ENCODE measurements at regions of chr22 and their contacts with region 1.

Region 1: GRCh38 chr22:38201710-38202436 is at the start of gene MAFF:
- DNase-seq: peak; percentile 73
- ATAC-seq: peak; percentile 75
- H3K4me3 Mint-ChIP-seq: peak within 1 kb of the TSS; percentile 86
- H3K27ac Mint-ChIP-seq: peak within 1 kb of the TSS; percentile 35
- H3K4me1 Mint-ChIP-seq: peaks cover 51% of the 10 kb centered on the region
- H3K27me3 Mint-ChIP-seq: no peaks in the 10 kb centered on the region
- CTCF ChIP-seq: no peak
- total RNA-seq, gene MAFF: 2.3 and 4.5 TPM in 2 replicates

Region 2: DNA sequence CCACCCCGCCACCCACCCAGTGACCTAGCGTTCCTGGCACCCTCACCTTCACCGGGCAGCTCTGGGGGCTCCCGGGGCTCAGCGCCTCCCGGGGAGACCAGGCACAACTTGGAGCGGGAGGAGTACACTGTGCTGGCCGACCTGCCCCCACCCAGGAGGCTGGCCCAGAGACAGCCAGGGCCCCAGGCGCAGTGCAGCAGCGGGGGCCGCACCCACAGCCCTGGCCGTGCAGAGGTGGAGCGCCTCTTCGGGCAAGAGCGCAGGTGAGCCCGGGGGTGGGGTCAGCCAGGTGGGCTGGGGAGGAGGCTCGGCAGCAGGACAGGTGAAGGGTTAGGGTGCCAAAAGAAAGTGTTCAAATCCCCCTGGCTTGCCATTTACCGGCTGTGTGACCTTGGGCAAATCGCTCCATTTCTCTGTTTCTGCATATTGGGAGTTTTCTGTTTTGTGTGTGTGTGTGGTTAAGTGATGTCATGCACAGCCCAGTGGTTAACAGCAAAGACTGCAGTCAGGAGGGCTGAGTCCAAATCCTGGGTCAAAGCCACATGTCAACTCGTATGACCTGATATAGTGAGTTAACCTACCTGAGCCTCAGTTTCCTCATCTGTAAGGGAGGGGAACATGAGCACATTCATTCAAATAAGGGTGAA is 475.5 kb before region 1 on chr22:
- CTCF ChIA-PET with region 1: no interaction called
- POLR2A ChIA-PET with region 1: no interaction called
- intact Hi-C with region 1: no loop called
- DNase-seq: no peak
- ATAC-seq: no peak
- H3K4me3 Mint-ChIP-seq: no peak overlapping the region
- H3K27ac Mint-ChIP-seq: no peak overlapping the region
- H3K4me1 Mint-ChIP-seq: no peaks in the 10 kb centered on the region
- H3K27me3 Mint-ChIP-seq: no peaks in the 10 kb centered on the region
- CTCF ChIP-seq: no peak

Region 3: DNA sequence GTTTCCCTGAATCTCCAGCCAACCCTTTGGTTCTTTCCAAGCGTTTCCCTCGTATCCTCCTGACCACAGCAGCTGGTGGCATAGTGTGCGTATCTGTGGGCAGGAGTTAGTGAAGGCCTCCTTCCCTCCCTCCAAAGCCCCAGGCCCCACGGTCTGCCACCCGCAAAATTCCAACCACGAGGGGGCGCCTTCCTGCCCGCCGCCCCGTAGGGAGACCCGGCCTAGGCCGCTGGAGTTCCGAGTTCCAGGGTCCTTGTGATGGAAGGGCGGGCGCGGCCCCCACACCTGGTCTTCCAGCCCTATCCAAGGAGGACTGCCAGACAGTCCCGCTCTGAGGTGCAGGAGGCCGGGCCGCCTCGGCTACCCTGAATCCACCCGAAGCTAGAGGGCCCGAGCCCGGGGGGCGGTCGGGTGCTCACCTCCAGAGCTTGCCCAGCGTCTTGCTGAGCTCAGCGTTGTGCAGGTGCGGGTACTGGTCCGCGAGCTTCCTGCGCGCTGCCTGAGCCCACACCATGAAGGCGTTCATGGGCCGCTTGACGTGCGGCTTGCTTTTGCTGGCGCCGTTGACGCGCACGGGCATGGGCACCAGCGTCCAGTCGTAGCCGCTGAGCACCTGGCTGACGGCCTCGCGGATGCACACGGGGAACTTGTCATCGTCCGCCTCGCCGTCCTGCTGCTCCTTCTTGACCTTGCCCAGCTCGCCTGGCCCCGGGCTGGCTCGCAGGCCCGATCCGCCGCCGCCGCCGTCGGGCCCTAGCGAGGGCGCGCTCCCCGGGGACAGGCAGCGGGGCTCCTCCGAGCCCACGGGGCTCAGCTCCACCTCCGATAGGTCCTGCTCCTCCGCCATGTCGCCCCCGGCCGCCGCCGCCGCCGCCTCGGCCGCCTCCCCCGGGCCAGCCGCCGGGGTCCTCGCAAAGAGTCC is 218.7 kb before region 1 on chr22:
- CTCF ChIA-PET with region 1: no interaction called
- POLR2A ChIA-PET with region 1: no interaction called
- intact Hi-C with region 1: no loop called
- DNase-seq: no peak
- ATAC-seq: no peak
- H3K4me3 Mint-ChIP-seq: no peak overlapping the region
- H3K27ac Mint-ChIP-seq: no peak overlapping the region
- H3K4me1 Mint-ChIP-seq: no peaks in the 10 kb centered on the region
- H3K27me3 Mint-ChIP-seq: no peaks in the 10 kb centered on the region
- CTCF ChIP-seq: no peak

Region 4: DNA sequence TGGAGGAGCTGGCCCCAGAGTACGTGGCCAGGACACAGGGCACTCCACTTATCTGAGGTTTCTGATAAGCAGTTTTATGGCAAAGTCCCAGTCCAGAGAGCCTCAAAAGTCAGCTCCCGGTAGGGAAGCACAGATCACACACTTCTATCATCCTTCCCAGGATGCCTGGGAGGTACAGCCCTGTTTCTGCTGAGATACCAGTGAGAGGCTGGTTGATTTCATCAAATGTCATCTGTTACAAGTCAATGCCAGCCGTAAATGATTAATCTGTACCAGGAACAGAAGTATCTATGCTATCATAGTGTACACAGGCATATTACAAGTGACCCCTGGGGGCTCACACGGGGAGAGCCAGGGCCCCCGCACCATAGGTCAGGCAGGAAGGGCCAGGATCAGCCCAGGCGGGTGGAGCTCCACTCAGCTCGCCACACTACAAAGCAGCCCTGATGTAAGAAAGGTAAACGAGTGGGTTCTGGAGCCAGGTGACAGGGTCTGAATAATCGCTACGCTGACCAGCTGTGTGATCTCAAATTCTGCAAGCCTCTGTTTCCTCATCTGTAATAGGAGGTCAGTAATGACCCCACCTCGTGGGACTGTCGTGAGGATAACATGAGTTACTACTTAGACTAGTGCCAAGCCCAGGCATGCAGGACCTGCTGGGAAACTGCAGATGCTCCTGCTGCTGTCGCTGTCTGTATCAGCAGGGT is 37.9 kb before region 1 on chr22:
- CTCF ChIA-PET with region 1: interaction called, 3 read pairs
- POLR2A ChIA-PET with region 1: interaction called, 5 read pairs
- intact Hi-C with region 1: loop called (anchors 2 kb)
- DNase-seq: no peak
- ATAC-seq: no peak
- H3K4me3 Mint-ChIP-seq: no peak overlapping the region
- H3K27ac Mint-ChIP-seq: peak overlapping the region; percentile 79
- H3K4me1 Mint-ChIP-seq: peaks cover 40% of the 10 kb centered on the region
- H3K27me3 Mint-ChIP-seq: no peaks in the 10 kb centered on the region
- CTCF ChIP-seq: no peak

Region 5: DNA sequence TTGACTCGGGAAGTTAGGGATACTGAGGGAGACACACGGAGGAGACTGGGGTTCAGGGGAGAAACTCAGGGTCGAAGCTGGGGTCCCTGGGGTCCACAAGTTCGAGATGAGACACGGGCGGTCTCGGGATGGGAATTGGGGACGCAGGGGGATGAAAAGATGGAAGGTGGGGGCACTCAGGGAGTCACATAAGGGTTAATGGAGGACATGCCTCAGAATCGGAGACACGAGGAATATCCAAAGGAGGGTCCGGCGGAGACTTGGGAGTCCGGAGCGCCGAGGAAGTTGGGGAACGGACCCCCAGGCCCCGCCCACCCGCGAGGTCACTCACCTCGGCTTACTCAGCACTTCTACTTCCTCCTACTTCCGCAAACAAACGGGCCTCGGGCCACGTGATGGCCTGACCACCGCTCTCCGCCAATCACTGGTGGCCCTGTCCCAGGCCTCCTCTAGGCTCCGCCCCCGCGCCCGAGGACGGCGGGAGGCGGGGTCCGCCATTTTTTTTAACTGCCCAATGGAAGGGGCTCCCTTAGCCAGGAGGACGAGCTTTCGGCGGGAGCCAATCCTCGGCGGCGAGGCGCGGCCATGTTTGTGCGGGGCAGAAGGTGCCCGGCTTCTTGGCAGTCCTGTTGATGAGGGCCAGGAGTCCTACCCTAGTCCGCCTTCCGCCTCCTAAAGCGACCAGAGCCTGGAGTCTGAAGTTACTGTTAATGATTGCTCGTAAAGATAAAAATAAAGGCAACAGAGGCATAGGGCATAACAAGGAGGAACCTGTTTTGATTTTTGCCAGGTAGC is 20.2 kb before region 1 on chr22 and contains the start of gene PLA2G6:
- CTCF ChIA-PET with region 1: no interaction called
- POLR2A ChIA-PET with region 1: interaction called, 11 read pairs
- intact Hi-C with region 1: loop called (anchors 1 kb)
- DNase-seq: peak; percentile 97
- ATAC-seq: peak; percentile 97
- H3K4me3 Mint-ChIP-seq: peak within 1 kb of the TSS; percentile 92
- H3K27ac Mint-ChIP-seq: peak within 1 kb of the TSS; percentile 85
- H3K4me1 Mint-ChIP-seq: peaks cover 43% of the 10 kb centered on the region
- H3K27me3 Mint-ChIP-seq: peaks cover 4% of the 10 kb centered on the region
- CTCF ChIP-seq: no peak
- total RNA-seq, gene PLA2G6: 53.0 and 64.0 TPM in 2 replicates

Region 6: DNA sequence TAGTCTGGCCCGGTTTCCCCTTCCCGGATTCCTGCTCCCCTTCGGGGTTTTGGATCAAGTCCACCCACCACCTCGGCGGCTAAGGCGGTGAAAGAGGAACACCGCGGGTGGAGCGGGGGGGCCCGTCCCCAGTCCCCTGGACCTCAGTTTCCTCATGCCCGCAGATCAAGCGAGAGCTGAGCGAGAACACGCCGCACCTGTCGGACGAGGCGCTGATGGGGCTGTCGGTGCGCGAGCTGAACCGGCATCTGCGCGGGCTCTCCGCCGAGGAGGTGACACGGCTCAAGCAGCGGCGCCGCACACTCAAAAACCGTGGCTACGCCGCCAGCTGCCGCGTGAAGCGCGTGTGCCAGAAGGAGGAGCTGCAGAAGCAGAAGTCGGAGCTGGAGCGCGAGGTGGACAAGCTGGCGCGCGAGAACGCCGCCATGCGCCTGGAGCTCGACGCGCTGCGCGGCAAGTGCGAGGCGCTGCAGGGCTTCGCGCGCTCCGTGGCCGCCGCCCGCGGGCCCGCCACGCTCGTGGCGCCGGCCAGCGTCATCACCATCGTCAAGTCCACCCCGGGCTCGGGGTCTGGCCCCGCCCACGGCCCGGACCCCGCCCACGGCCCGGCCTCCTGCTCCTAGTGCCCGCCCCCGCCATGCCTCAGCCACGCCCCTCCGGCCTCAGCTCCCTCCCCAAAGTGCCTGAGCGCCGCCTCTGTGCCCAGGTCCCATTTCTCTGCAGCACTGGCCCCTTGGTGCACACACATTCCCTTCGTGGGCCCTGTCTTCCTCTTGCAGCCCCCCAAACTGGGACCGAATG is 12.6 kb after region 1 on chr22:
- CTCF ChIA-PET with region 1: interaction called, 8 read pairs
- POLR2A ChIA-PET with region 1: interaction called, 8 read pairs
- intact Hi-C with region 1: loop called (anchors 1 kb)
- DNase-seq: peak; percentile 68
- ATAC-seq: peak; percentile 89
- H3K4me3 Mint-ChIP-seq: peak overlapping the region; percentile 71
- H3K27ac Mint-ChIP-seq: peak overlapping the region; percentile 18
- H3K4me1 Mint-ChIP-seq: peaks cover 24% of the 10 kb centered on the region
- H3K27me3 Mint-ChIP-seq: no peaks in the 10 kb centered on the region
- CTCF ChIP-seq: no peak

Region 7: DNA sequence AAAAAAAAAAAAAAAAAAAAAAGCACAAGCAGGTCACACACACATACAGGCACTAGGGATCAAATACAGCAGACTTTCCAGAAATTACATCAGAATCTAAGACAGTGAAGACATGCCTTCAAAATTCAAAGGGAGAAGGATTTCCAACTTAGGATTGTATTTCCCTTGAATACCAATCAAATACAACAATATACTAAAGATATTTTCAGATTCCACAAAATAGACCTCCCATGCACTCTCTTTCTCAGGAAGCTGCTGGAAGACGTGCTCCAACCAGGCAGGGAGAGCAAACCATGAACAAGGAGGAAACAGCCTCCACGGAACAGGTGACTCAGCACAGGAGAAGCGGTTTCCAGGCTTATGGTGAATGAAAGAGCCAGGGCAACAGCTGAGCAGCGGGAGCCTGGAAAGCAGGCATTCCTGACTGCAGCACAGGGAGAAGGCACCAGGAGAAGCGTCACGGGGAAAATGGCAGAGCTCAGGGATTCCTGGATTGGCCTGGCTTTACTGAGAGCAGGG is 38.9 kb after region 1 on chr22:
- CTCF ChIA-PET with region 1: no interaction called
- POLR2A ChIA-PET with region 1: no interaction called
- intact Hi-C with region 1: no loop called
- DNase-seq: no peak
- ATAC-seq: no peak
- H3K4me3 Mint-ChIP-seq: no peak overlapping the region
- H3K27ac Mint-ChIP-seq: no peak overlapping the region
- H3K4me1 Mint-ChIP-seq: no peaks in the 10 kb centered on the region
- H3K27me3 Mint-ChIP-seq: no peaks in the 10 kb centered on the region
- CTCF ChIP-seq: no peak

Region 8: DNA sequence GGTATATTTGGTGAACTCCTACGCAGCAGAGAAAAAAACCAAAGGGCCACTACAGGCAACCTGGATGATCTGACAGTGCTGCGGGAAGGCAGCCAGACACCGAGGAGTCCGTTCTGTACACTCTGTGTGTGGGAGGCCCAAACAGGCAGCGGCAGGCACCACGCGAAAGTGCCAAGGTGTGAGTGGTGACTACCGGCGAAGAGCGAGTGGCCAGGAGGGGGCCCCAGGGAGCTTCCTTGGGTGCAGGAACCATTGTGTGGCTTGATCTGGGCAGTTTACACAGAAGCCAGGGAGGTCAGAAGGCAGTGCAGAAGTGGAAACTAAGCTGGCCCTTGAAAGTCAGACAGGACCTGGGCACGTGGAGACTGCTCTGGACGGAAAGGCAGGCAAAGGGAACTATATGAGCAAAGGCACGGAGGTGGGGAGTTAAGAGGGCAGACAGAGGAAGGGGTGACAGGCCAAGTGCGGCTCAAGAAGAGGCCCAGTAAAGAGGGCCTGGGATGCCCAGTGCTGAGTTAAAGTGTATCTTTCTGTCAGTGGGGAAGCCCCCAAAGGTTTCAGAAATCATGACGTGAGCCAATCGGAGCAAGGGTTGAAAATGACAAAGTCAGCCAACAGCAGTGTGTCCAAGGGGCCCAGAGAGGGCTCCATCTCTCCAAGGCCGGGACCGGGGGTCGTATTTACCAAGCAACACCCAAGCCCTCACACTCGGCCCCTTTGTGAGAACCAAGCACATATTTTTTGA is 60.4 kb after region 1 on chr22:
- CTCF ChIA-PET with region 1: no interaction called
- POLR2A ChIA-PET with region 1: no interaction called
- intact Hi-C with region 1: loop called (anchors 5 kb)
- DNase-seq: peak; percentile 34
- ATAC-seq: peak; percentile 38
- H3K4me3 Mint-ChIP-seq: no peak overlapping the region
- H3K27ac Mint-ChIP-seq: peak overlapping the region; percentile 57
- H3K4me1 Mint-ChIP-seq: peaks cover 44% of the 10 kb centered on the region
- H3K27me3 Mint-ChIP-seq: no peaks in the 10 kb centered on the region
- CTCF ChIP-seq: no peak

Region 9: DNA sequence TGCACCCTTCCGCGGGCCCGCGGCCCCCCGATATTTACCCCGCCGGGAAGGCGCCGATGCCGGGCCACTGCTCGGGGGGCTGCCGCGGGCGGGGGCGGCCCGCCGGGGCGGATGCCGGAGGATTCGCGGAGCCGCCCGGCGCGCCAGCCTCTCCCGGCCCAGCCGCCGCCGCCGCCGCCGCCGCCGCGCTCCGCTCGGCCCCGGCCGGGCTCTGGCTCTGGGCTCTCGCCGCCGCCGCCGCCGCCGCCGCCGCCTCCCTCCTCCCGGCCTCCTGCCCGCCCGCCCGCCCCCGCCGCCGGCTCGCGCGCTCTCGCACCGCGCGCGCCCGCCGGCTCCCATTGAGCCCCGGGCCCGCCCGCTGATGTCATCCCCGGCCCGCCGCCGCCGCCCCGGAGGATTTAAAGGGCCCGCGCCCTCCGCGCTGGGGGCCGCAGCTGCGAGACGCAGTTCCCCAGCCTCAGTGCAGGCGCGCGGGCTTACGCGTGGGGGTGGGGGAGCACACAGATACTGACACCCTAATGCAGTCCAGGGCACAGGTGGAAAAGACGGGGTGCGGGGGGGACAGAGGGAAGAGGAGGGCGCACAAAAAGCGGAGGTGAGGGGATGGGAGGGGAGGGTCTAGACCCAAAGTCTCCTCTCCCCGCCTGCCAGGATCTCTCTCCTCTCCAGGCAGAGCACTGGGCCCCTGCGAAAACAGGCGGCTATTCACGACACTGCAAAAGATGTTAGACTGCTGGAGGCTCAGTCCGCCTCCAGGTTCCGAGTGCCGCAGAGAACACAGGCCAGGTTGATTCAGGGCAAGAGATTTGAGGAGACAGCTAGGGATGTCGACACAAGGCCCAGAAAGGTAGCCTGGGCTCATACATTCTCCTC is 115.5 kb after region 1 on chr22 and contains the start of gene CSNK1E:
- CTCF ChIA-PET with region 1: no interaction called
- POLR2A ChIA-PET with region 1: no interaction called
- intact Hi-C with region 1: loop called (anchors 2 kb)
- DNase-seq: peak; percentile 72
- ATAC-seq: peak; percentile 58
- H3K4me3 Mint-ChIP-seq: peak within 1 kb of the TSS; percentile 82
- H3K27ac Mint-ChIP-seq: peak within 1 kb of the TSS; percentile 88
- H3K4me1 Mint-ChIP-seq: peaks cover 50% of the 10 kb centered on the region
- H3K27me3 Mint-ChIP-seq: no peaks in the 10 kb centered on the region
- CTCF ChIP-seq: no peak
- total RNA-seq, gene CSNK1E: 80.6 and 85.2 TPM in 2 replicates

Measured in activated B cell treated with CpG ODN at 0.5 μM for 24 hours (primary cell).